ENCODE measurements at regions of chr16 and their contacts with region 1.

Region 1: GRCh38 chr16:66869424-66869823 is 10.9 kb upstream of the PDP2 start:
- DNase-seq: no peak
- H3K4me3 ChIP-seq: no peak overlapping the region
- H3K27ac ChIP-seq: no peak overlapping the region
- H3K4me1 ChIP-seq: peaks cover 0 to 9% of the 10 kb centered on the region in 2 donors
- H3K27me3 ChIP-seq: no peaks in the 10 kb centered on the region
- CTCF ChIP-seq: no peak
- POLR2A ChIP-seq: no peak

Region 2: GRCh38 chr16:66580605-66581209 is 288.7 kb before region 1 on chr16:
- intact Hi-C with region 1: no loop called
- DNase-seq: no peak
- H3K4me3 ChIP-seq: no peak overlapping the region
- H3K27ac ChIP-seq: no peak overlapping the region
- H3K4me1 ChIP-seq: peaks cover 10 to 16% of the 10 kb centered on the region in 2 donors
- H3K27me3 ChIP-seq: no peaks in the 10 kb centered on the region
- CTCF ChIP-seq: no peak
- POLR2A ChIP-seq: no peak

Region 3: GRCh38 chr16:66728117-66728787 is 141.2 kb before region 1 on chr16:
- intact Hi-C with region 1: loop called (anchors 5 to 10 kb)
- DNase-seq: peak; percentile 50 to 79 (median 63)
- H3K4me3 ChIP-seq: no peak overlapping the region
- H3K27ac ChIP-seq: peak overlapping the region in 1 of 5 donors; percentile 9
- H3K4me1 ChIP-seq: peaks cover 0 to 4% of the 10 kb centered on the region in 2 donors
- H3K27me3 ChIP-seq: no peaks in the 10 kb centered on the region
- CTCF ChIP-seq: peak; percentile 60 to 81 (median 65)
- POLR2A ChIP-seq: no peak

Region 4: DNA sequence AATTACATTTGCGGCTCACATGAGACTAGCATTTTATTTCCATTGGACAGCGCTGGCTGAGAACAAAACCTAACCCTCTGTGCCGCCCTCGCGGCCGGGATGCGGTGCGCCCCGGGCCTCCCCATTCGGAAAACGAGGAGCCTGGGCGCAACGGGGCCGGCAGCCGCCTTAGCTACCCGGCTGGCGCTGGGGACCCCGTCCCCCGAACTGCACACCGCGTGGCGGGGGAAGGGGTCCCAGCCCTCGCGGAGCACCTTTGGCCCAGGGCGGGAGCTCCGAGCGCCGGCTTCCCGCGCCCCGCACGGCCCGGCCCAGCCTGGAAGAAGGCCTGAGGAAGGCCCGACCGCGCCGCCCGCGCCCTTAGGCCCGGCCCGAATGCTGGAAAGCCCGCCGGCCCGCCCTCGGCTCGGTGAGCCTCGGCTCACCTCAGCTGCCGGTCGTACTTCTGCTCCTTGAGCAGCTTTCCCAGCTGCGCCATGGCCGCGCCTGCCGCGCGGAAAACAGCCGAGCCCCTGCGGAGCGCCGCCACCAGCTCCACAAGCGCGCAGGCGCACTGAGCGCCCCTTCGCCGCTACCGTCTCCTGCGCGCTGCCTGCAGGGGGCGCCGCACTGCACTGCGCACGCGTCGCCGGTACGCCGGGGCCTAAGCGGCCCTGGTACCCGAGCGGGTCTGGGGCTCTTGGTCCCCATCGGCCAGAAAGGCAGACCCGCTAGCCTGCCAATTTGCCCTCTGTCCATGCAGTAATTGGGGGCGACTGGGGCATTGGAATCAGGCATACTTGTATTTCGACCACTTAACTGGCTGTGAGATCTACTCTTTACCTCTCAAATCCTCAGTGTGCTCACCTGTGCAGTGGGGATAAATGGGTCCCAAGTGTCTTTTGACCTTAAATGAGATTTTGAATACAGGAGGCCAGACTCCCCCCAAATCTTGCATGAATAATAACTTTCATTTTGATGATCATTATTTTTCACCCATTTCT is 38.7 kb before region 1 on chr16 and contains the start of gene NAE1:
- intact Hi-C with region 1: loop called (anchors 5 kb)
- DNase-seq: peak; percentile 76 to 90 (median 86)
- H3K4me3 ChIP-seq: peak within 1 kb of the TSS; percentile 29 to 81 (median 51)
- H3K27ac ChIP-seq: peak within 1 kb of the TSS; percentile 31 to 96 (median 91)
- H3K4me1 ChIP-seq: peaks cover 13 to 18% of the 10 kb centered on the region in 2 donors
- H3K27me3 ChIP-seq: no peaks in the 10 kb centered on the region
- CTCF ChIP-seq: peak; percentile 74 to 98 (median 90)
- POLR2A ChIP-seq: peak; percentile 77 to 85
- total RNA-seq, gene NAE1: 30.9 to 94.7 (median 51.2) TPM